CD14-positive monocyte (primary cell): ENCODE measurements at regions of chr4 and their contacts with region 1.

Region 1: GRCh38 chr4:153432968-153433753 is 33.0 kb upstream of the TMEM131L start:
- DNase-seq: peak; percentile 75 to 88 (median 81)
- H3K4me3 ChIP-seq: peak overlapping the region; percentile 54 to 96 (median 82)
- H3K4me3 Mint-ChIP-seq: peak overlapping the region; percentile 90 to 95
- H3K27ac ChIP-seq: peak overlapping the region; percentile 80 to 85
- H3K27ac Mint-ChIP-seq: peak overlapping the region; percentile 91 to 100 (median 97)
- H3K4me1 ChIP-seq: peaks cover 18 to 24% of the 10 kb centered on the region in 2 donors
- H3K4me1 Mint-ChIP-seq: peaks cover 19% of the 10 kb centered on the region
- H3K27me3 ChIP-seq: no peaks in the 10 kb centered on the region
- H3K27me3 Mint-ChIP-seq: peaks cover 0 to 5% (median 2%) of the 10 kb centered on the region in 3 donors
- CTCF ChIP-seq: peak; percentile 72

Region 2: DNA sequence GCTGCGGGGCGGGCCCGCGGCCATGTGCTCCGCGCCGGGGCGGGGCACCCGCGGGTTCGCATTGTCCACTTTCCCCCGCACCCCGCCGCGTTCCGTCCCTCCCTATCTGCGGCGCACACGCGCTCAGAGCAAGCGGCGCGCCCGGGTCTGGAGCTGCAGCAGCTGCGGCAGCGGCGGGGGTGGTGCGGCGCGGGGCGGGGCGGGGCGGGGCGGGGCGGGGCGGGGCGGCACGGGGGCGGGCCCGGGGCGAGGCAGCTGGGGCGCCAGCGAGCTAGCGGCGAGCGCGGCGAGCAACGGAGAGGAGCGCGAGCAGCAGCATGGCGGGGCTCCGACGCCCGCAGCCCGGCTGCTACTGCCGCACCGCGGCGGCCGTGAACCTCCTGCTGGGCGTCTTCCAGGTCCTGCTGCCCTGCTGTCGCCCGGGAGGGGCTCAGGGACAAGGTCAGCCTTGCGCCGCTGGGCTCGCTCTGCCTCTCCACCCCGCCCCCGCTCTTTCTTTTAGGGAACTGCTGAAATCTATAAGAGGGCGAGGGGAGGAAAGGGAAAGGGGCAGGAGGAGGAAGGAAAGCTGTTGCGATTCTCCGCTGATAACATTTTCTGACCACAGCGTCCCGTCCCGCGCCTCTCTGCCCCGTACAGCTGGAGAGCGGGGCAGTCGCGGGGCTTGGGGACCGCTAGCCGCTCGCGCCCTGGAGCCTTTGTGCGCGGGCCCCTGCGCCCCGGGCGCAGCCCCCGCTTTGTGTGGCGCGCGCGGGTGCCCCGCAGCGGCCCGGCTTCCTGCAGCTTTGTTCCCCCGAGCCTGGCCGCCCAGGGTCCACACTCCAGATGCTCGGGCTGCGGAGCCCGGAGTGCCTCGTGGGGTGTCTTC is 33.2 kb after region 1 on chr4 and contains the start of gene TMEM131L:
- intact Hi-C with region 1: loop called in 1 of 2 experiments (anchors 5 kb)
- DNase-seq: peak; percentile 70 to 84 (median 76)
- H3K4me3 ChIP-seq: peak within 1 kb of the TSS; percentile 80 to 98 (median 94)
- H3K4me3 Mint-ChIP-seq: peak within 1 kb of the TSS; percentile 96 to 98
- H3K27ac ChIP-seq: peak within 1 kb of the TSS; percentile 68 to 88
- H3K27ac Mint-ChIP-seq: peak within 1 kb of the TSS; percentile 82 to 95 (median 91)
- H3K4me1 ChIP-seq: peaks cover 41 to 60% of the 10 kb centered on the region in 2 donors
- H3K4me1 Mint-ChIP-seq: peaks cover 53% of the 10 kb centered on the region
- H3K27me3 ChIP-seq: no peaks in the 10 kb centered on the region
- H3K27me3 Mint-ChIP-seq: peaks cover 0 to 3% (median 3%) of the 10 kb centered on the region in 3 donors
- CTCF ChIP-seq: no peak
- polyA plus RNA-seq, gene TMEM131L: 11.2 to 58.3 (median 26.0) TPM

Region 3: DNA sequence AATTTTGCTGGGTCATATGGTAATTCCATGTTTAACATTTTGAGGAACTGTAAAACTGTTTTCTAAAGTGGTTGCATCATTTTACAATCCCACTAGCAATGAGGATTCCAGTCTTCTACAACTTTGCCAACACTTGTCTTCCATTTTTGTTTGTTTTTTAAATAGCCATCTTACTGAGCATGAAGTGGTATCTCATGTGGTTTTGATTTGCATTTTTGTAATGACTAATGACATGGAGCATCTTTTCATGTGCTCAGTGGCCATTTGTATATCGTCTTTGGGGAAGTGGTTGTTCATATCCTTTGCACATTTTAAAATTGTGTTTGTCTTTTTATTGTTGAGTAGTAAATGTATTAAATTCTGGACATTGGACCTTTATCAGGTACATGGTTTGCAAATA is 127.7 kb after region 1 on chr4:
- intact Hi-C with region 1: no loop called
- DNase-seq: peak in 1 of 3 donors; percentile 11
- H3K4me3 ChIP-seq: no peak overlapping the region
- H3K4me3 Mint-ChIP-seq: no peak overlapping the region
- H3K27ac ChIP-seq: peak overlapping the region in 1 of 2 donors; percentile 32
- H3K27ac Mint-ChIP-seq: peak overlapping the region in 1 of 7 donors; percentile 74
- H3K4me1 ChIP-seq: peaks cover 0 to 8% of the 10 kb centered on the region in 2 donors
- H3K4me1 Mint-ChIP-seq: peaks cover 7% of the 10 kb centered on the region
- H3K27me3 ChIP-seq: no peaks in the 10 kb centered on the region
- H3K27me3 Mint-ChIP-seq: no peaks in the 10 kb centered on the region
- CTCF ChIP-seq: no peak

Region 4: DNA sequence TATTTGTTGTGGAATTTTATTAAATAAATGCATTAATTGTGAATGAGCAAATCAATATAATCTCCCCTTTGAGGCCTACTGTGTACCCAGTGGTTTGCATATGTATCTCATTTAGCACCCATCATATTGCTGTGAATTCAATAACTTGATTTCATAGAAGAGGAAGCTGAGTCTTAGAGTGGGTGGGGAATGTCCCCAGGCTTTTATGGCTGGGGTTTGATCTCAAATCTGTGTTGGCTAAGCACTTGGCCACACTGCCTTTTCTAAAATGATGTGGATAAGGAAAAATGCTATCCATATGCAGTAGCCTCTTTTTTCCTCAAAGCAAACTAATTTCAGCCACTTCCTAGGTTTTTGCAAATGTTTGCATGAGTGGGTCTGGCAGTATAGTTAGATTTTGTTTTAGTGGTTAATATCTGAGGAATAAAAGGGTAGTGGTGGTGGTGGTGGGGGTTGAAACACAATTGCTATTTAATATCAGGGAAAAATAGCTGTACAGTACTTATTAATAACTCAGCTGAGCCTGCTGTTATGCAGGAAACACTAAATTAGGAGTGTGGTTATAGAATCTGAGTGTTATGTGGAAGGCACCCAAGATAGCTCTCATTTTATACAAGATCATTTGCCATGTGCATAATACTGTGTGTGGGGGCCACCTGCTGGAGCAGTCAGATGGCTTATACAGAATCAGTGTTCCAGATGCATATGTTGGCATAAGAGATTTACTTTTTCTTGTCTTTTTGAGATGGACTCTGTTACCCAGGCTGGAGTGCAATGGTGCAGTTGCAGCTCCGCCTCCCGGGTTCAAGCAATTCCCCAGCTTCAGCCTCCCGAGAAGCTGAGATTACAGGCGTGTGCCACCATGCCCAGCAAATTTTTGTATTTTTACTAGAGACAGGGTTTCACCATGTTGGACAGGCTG is 141.0 kb after region 1 on chr4:
- intact Hi-C with region 1: loop called (anchors 5 to 10 kb)
- DNase-seq: peak in 1 of 3 donors; percentile 15
- H3K4me3 ChIP-seq: no peak overlapping the region
- H3K4me3 Mint-ChIP-seq: no peak overlapping the region
- H3K27ac ChIP-seq: peak overlapping the region in 1 of 2 donors; percentile 13
- H3K27ac Mint-ChIP-seq: peak overlapping the region in 1 of 7 donors; percentile 63
- H3K4me1 ChIP-seq: peaks cover 0 to 12% of the 10 kb centered on the region in 2 donors
- H3K4me1 Mint-ChIP-seq: peaks cover 30% of the 10 kb centered on the region
- H3K27me3 ChIP-seq: no peaks in the 10 kb centered on the region
- H3K27me3 Mint-ChIP-seq: no peaks in the 10 kb centered on the region
- CTCF ChIP-seq: peak; percentile 9

Region 5: GRCh38 chr4:153594210-153594609 is 161.0 kb after region 1 on chr4:
- intact Hi-C with region 1: no loop called
- DNase-seq: no peak
- H3K4me3 ChIP-seq: no peak overlapping the region
- H3K4me3 Mint-ChIP-seq: no peak overlapping the region
- H3K27ac ChIP-seq: no peak overlapping the region
- H3K27ac Mint-ChIP-seq: no peak overlapping the region
- H3K4me1 ChIP-seq: no peaks in the 10 kb centered on the region
- H3K4me1 Mint-ChIP-seq: peaks cover under 1% of the 10 kb centered on the region
- H3K27me3 ChIP-seq: no peaks in the 10 kb centered on the region
- H3K27me3 Mint-ChIP-seq: no peaks in the 10 kb centered on the region
- CTCF ChIP-seq: no peak